Gastrocnemius medialis (tissue), 4 donors: ENCODE measurements at regions of chr6 and their contacts with region 1.

Region 1: DNA sequence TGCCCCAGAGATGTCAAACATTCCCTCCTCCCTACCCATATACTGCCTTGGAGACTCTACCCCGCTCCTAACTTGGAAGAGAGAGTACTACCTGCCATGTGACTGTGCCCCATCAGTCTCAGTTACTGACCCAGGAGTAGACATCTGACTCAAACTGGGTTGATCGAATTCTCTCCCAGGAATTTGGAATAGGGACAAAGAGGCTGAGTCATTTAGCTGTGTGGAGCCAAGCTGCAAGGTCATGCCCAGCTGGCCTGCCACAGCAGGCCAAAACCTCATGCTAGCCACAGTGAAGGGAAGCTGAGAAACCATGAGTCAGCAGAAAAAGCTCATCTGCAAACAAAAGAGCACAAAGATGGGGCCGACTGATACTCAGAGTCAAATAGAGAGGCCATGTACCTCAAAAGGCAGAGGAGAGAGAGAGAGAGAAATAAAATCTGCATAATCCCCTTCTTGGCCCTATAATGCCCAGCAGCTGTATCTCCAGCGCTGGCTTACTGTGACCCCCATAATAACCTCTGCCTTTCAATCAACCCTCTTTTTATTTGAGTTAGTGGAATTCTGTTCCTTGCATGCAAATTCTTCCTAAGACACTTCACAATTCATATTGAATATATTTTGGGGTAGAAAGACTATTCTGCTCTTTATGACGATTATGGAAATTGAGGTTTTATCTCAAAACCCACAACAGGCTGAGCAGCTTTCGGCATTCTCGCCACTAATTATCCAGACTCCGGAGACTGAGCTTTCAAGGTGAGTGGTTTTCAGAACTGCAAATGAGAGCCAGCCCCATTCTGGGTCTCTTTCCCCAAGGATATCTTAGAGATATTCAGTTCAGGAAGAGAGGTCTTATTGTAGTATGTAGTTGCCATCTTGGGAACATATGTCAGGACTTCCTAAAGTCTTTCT is 21.4 kb upstream of the AKIRIN2 start:
- DNase-seq: peak; percentile 84 to 92
- ATAC-seq: peak; percentile 97 to 98
- H3K4me3 ChIP-seq: no peak overlapping the region
- H3K27ac ChIP-seq: peak overlapping the region; percentile 79 to 88 (median 84)
- H3K4me1 ChIP-seq: peaks cover 31 to 34% of the 10 kb centered on the region in 2 donors
- H3K27me3 ChIP-seq: no peaks in the 10 kb centered on the region
- CTCF ChIP-seq: no peak
- POLR2A ChIP-seq: peak in 1 of 2 donors; percentile 33

Region 2: DNA sequence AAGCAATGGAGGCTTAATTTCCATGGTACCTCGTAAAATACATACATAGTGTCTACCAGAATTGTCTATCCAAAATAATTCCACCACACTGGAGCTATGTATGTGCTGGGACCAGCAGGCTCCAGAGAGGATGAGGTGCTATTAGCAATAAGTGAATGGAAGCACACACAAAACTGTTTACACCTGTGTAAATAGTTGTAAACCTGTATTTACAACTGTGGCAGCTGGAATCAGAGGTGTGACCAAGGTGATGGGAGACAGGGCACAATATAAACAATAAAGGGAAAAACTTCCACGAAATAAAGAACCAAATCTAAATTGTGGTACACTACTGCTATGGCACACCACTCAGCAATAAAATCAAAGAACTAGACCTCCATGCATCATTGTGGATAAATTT is 148.0 kb before region 1 on chr6:
- in situ Hi-C with region 1: no loop called
- intact Hi-C with region 1: no loop called
- DNase-seq: no peak
- ATAC-seq: no peak
- H3K4me3 ChIP-seq: no peak overlapping the region
- H3K27ac ChIP-seq: no peak overlapping the region
- H3K4me1 ChIP-seq: peaks cover 15 to 19% of the 10 kb centered on the region in 2 donors
- H3K27me3 ChIP-seq: no peaks in the 10 kb centered on the region
- CTCF ChIP-seq: no peak
- POLR2A ChIP-seq: no peak

Region 3: DNA sequence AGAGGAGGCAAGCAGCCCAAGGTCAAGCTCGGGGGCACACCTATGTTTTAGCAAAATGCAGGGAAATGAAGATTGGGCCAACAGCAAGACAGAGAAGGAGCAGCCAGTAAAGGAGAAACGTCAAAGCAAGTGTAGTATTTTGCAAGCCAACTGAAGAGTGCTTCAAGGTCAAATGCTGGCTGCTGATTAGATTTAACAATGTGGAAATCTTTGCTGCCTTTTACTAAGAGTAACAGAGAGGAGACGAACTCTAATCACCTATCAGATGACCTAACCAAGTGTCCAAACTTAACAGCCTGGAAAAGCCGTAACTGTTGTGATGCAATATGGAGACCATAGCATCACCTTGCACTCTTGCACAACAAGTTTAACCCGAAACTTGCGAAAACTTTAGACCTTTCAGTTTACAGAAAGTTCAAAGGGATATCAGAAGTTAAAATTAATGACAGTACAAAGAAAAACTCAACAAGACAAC is 51.8 kb before region 1 on chr6:
- in situ Hi-C with region 1: no loop called
- intact Hi-C with region 1: loop called (anchors 2 kb)
- DNase-seq: peak; percentile 38 to 68
- ATAC-seq: peak; percentile 95 to 97
- H3K4me3 ChIP-seq: no peak overlapping the region
- H3K27ac ChIP-seq: peak overlapping the region; percentile 83 to 99 (median 84)
- H3K4me1 ChIP-seq: peaks cover 44 to 51% of the 10 kb centered on the region in 2 donors
- H3K27me3 ChIP-seq: no peaks in the 10 kb centered on the region
- CTCF ChIP-seq: no peak
- POLR2A ChIP-seq: no peak

Region 4: GRCh38 chr6:87701676-87702588 is 21.5 kb before region 1 on chr6 and contains the start of gene AKIRIN2:
- in situ Hi-C with region 1: no loop called
- intact Hi-C with region 1: loop called (anchors 1 kb)
- DNase-seq: peak; percentile 97
- ATAC-seq: peak; percentile 80 to 81
- H3K4me3 ChIP-seq: peak within 1 kb of the TSS; percentile 86 to 94 (median 94)
- H3K27ac ChIP-seq: peak within 1 kb of the TSS; percentile 94 to 99 (median 97)
- H3K4me1 ChIP-seq: peaks cover 24 to 32% of the 10 kb centered on the region in 2 donors
- H3K27me3 ChIP-seq: no peaks in the 10 kb centered on the region
- CTCF ChIP-seq: no peak
- POLR2A ChIP-seq: peak; percentile 99 to 100
- total RNA-seq, gene AKIRIN2: 25.6 to 44.5 (median 33.1) TPM